GM23248 (cell line): ENCODE measurements at regions of chr15 and their contacts with region 1.

Region 1: DNA sequence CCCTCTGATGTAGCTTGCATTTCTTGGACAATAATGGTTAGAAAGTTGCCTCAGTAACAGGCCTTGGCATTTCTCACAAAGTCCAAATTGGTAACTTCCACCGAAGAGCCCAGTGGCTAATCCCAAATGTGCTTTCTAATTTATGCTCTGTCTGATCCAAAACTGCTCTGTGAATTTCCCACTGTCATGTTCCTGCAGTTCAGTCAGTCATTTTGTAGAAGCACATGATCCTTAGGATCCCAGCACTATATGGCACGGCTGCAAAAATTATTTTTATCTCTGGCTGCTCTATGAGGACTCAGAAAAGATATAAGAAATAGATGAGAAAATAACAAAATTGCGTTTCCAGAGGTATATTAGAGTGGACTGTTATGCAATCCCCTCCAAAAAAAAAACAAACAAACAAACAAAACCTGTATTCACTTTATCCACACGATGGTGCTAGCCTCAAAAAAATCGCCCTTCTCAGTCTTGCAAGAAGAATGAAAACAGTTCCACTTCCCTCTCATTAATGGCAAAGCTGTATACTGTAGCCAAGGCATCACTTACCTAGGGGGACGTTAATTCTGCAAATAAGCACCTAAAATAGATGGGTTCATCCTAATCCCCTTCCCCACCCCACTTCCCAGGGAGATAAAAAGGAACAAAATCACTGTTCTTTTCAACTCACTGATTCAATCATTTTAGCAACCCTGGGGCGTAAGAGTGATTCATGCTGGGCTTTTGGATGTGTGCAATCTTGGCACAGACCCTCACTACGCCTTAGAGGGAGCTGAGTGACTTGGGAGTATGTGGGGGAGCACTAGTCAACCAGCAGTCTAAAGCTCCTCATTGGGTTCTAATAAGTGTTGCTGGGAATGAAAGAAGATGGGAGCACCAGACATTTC is 61.3 kb downstream of the TMCO5A start:
- DNase-seq: peak; percentile 89
- H3K4me3 ChIP-seq: peak overlapping the region; percentile 58
- H3K27ac ChIP-seq: no peak overlapping the region
- H3K4me1 ChIP-seq: peaks cover 6% of the 10 kb centered on the region; the same call in 1 of the 2 replicates
- H3K27me3 ChIP-seq: no peaks in the 10 kb centered on the region

Region 2: GRCh38 chr15:38275959-38276358 is 280.3 kb after region 1 on chr15:
- in situ Hi-C with region 1: no loop called
- DNase-seq: peak; percentile 42
- H3K4me3 ChIP-seq: no peak overlapping the region
- H3K27ac ChIP-seq: no peak overlapping the region
- H3K4me1 ChIP-seq: peaks cover 16% of the 10 kb centered on the region
- H3K27me3 ChIP-seq: no peaks in the 10 kb centered on the region

Region 3: DNA sequence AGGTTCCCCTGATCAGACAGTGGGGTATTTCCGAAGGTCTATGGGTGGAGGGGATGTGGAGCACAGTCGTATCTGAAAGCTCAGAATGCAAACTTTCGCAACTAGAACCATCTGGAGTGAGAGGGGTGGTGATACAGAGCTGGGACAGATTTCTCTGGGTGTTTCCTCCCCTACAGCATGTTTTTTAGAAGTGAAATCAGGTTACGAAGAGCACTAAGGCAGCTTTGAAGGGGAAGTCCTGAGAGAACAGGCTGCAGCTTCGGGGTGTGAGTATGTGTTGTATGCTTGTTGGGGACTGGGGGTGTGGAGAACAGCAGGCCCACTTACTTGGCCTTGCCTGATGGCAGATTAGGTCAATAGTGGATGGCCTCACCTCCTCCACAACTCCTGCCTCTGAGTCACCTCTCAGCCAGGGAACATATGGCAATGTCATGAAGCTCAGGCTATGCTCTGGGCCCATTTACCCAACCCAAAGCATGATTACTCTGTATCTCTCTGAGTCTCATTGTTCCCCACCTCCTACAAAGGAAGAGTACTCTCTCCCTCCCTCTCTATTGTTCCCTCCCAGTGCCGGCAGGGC is 676.1 kb after region 1 on chr15:
- in situ Hi-C with region 1: loop called (anchors 25 kb)
- DNase-seq: peak; percentile 57
- H3K4me3 ChIP-seq: no peak overlapping the region
- H3K27ac ChIP-seq: no peak overlapping the region
- H3K4me1 ChIP-seq: no peaks in the 10 kb centered on the region
- H3K27me3 ChIP-seq: peaks cover 18% of the 10 kb centered on the region